CD14-positive monocyte (primary cell): ENCODE measurements at regions of chr7 and their contacts with region 1.

Region 1: DNA sequence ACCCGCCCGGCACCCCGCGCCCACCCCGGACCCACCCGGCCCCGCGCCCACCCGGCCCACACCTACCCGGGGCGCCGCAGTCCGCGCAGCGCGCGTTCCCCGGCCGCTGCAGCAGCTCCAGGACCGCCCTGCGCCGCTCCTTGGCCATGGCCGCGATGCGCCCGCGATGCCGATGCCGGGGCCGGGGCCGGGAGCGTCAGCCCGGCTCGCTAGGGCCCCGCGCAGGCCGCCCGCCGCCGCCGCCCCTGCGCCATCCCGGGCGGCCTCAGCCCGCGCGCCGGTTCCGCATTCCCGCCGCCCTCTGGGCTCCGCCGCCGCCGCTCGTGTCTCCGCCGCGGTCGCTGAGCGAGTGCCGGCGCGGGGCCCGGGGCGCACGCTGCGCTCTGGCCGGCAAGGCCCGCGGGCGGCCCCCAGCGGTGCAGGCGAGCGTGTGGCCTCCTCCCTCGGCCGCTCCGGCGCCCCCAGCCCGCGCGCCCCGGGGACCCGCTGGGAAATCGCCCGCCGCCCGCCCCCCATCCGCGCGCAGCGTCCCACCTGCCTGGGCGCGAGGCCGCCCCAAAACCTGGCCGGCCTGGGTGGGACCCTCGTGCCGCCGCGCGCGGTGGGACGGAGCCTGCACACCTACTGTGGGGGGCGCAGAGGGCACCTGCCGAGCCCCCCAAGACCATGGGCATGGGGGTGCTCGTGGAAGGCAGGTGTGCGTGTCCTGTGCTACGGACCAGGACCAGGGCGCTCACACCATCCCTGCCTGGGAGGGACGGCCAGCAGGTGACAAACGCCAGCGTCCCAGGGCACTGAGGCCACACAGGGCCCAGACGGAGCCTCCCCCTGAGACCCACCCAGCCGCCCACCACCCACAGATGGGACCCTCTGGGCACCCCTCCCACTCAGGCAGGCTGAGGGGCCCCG is at the start of gene ADAP1:
- DNase-seq: peak; percentile 65 to 86 (median 82)
- H3K4me3 ChIP-seq: peak within 1 kb of the TSS; percentile 72 to 92 (median 86)
- H3K4me3 Mint-ChIP-seq: peak within 1 kb of the TSS; percentile 72 to 73
- H3K27ac ChIP-seq: peak within 1 kb of the TSS; percentile 80 to 98
- H3K27ac Mint-ChIP-seq: peak within 1 kb of the TSS; percentile 80 to 91 (median 86)
- H3K4me1 ChIP-seq: peaks cover 81 to 90% of the 10 kb centered on the region in 2 donors
- H3K4me1 Mint-ChIP-seq: peaks cover 66% of the 10 kb centered on the region
- H3K27me3 ChIP-seq: no peaks in the 10 kb centered on the region
- H3K27me3 Mint-ChIP-seq: peaks cover 0 to 2% (median 0%) of the 10 kb centered on the region in 3 donors
- CTCF ChIP-seq: peak; percentile 51
- polyA plus RNA-seq, gene ADAP1: 49.1 to 117 (median 72.2) TPM

Region 2: DNA sequence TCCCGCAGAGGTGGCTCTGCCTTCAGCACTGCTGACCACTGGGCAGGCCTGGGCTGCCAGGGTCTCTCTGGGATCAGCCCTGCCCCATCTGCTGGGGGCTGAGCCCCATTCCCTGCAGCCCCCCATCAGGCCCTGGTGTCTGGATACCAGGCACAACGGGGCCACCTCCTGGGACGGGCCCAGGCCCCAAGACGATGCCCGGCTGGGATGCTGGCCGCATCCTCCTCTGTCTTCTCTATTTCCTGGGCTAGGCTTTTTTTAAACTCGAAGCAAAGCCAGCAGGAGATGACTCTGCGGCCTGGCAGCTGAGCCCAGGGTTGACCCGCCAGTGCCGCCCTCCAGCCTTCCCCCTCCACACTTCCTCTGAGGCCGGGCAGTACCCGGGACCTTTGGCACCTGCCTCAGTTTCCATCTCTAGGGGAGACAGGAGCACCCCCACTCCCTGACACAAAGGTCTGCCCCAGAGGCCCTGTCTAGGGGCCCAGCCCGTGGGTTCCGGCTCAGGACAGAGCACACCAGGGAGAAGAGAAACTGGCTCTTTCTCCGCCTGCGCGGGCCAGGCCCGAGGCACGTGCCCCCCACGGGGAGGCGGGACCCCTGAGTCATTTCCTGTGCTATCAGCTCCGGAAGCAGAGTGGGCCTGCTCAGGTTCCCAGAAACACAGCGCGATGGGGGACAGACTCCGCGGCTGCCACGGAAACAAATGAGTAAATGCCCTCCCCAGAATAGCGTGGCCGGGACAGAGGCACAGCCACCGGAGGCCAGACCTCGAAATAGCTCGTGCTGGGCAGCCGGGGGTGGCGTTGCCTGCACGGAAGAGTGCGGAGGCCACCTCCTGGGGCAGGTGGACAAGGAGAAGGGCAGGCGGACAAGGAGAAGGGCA is 350.3 kb before region 1 on chr7:
- intact Hi-C with region 1: loop called in 1 of 2 experiments (anchors 5 kb)
- DNase-seq: peak; percentile 92 to 96 (median 95)
- H3K4me3 ChIP-seq: peak overlapping the region in 2 of 3 experiments; percentile 32 to 41
- H3K4me3 Mint-ChIP-seq: peak overlapping the region; percentile 69 to 88
- H3K27ac ChIP-seq: peak overlapping the region; percentile 96 to 97
- H3K27ac Mint-ChIP-seq: peak overlapping the region; percentile 97 to 99 (median 98)
- H3K4me1 ChIP-seq: peaks cover 46 to 58% of the 10 kb centered on the region in 2 donors
- H3K4me1 Mint-ChIP-seq: peaks cover 50% of the 10 kb centered on the region
- H3K27me3 ChIP-seq: no peaks in the 10 kb centered on the region
- H3K27me3 Mint-ChIP-seq: peaks cover 1 to 8% (median 2%) of the 10 kb centered on the region in 3 donors
- CTCF ChIP-seq: no peak

Region 3: GRCh38 chr7:711093-711921 is 243.3 kb before region 1 on chr7:
- intact Hi-C with region 1: no loop called
- DNase-seq: no peak
- H3K4me3 ChIP-seq: no peak overlapping the region
- H3K4me3 Mint-ChIP-seq: peak overlapping the region in 1 of 2 donors; percentile 62
- H3K27ac ChIP-seq: no peak overlapping the region
- H3K27ac Mint-ChIP-seq: peak overlapping the region in 1 of 7 donors; percentile 64
- H3K4me1 ChIP-seq: no peaks in the 10 kb centered on the region
- H3K4me1 Mint-ChIP-seq: no peaks in the 10 kb centered on the region
- H3K27me3 ChIP-seq: peaks cover 0 to 25% of the 10 kb centered on the region in 2 donors
- H3K27me3 Mint-ChIP-seq: peaks cover 22 to 37% (median 33%) of the 10 kb centered on the region in 3 donors
- CTCF ChIP-seq: no peak

Region 4: GRCh38 chr7:909358-910329 is 44.9 kb before region 1 on chr7:
- intact Hi-C with region 1: loop called (anchors 2 kb)
- DNase-seq: peak; percentile 97 to 99 (median 98)
- H3K4me3 ChIP-seq: peak overlapping the region; percentile 38 to 78 (median 54)
- H3K4me3 Mint-ChIP-seq: peak overlapping the region; percentile 72 to 78
- H3K27ac ChIP-seq: peak overlapping the region; percentile 84 to 99
- H3K27ac Mint-ChIP-seq: peak overlapping the region; percentile 92 to 97 (median 96)
- H3K4me1 ChIP-seq: peaks cover 74 to 79% of the 10 kb centered on the region in 2 donors
- H3K4me1 Mint-ChIP-seq: peaks cover 50% of the 10 kb centered on the region
- H3K27me3 ChIP-seq: no peaks in the 10 kb centered on the region
- H3K27me3 Mint-ChIP-seq: no peaks in the 10 kb centered on the region
- CTCF ChIP-seq: peak; percentile 42

Region 5: DNA sequence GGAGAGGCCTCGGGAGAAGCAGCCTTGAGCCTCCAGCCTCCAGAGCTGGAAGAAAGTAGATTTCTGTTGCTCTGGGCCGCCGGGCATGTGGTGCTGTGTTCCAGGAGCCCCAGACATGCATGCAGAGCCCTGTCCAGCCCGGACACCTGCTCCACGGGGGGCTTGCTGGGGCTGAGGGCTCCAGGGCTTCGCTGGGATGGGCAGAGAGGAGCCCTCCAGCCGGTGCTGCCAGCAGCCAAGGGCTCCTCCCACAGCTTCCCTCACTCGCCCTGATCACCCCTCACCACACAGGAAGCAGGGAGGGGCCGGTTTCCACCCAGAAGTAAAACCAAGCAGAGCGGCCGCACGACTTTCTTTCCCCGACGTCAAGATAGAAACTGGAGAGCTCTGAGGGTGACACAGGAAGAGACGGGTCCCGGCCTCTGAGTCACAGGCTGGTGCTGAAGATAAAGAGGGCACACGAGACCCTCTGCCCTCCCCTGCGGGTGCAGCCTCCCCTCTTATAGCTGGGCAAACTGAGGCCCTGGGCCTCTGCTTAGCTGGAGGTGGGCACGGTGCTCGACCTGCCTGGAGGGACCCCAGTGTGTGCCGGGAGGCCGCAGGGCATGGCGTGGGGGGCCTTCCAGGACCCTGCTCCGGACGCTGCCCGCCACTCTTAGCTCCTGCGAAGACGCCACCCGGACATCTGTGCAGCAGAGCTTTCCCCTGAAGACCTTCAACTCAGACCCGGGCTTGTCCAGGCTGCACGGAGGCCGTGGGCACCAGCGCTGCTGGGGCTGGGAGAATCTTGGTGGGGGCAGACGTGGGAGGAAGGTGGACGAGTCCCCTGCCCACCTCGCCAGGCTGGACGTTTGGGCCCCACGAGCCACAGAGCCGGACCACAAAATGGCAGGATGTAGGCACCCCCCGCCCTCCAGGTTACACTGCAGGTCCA is 31.2 kb before region 1 on chr7:
- intact Hi-C with region 1: loop called in 1 of 2 experiments (anchors 5 kb)
- DNase-seq: peak; percentile 95 to 97 (median 96)
- H3K4me3 ChIP-seq: peak overlapping the region; percentile 12 to 65 (median 40)
- H3K4me3 Mint-ChIP-seq: peak overlapping the region; percentile 66 to 80
- H3K27ac ChIP-seq: peak overlapping the region; percentile 98 to 100
- H3K27ac Mint-ChIP-seq: peak overlapping the region; percentile 93 to 98 (median 95)
- H3K4me1 ChIP-seq: peaks cover 73 to 89% of the 10 kb centered on the region in 2 donors
- H3K4me1 Mint-ChIP-seq: peaks cover 62% of the 10 kb centered on the region
- H3K27me3 ChIP-seq: no peaks in the 10 kb centered on the region
- H3K27me3 Mint-ChIP-seq: peaks cover 0 to 2% (median 0%) of the 10 kb centered on the region in 3 donors
- CTCF ChIP-seq: no peak